Transverse colon (tissue), 4 donors: ENCODE measurements at regions of chr6 and their contacts with region 1.

Region 1: DNA sequence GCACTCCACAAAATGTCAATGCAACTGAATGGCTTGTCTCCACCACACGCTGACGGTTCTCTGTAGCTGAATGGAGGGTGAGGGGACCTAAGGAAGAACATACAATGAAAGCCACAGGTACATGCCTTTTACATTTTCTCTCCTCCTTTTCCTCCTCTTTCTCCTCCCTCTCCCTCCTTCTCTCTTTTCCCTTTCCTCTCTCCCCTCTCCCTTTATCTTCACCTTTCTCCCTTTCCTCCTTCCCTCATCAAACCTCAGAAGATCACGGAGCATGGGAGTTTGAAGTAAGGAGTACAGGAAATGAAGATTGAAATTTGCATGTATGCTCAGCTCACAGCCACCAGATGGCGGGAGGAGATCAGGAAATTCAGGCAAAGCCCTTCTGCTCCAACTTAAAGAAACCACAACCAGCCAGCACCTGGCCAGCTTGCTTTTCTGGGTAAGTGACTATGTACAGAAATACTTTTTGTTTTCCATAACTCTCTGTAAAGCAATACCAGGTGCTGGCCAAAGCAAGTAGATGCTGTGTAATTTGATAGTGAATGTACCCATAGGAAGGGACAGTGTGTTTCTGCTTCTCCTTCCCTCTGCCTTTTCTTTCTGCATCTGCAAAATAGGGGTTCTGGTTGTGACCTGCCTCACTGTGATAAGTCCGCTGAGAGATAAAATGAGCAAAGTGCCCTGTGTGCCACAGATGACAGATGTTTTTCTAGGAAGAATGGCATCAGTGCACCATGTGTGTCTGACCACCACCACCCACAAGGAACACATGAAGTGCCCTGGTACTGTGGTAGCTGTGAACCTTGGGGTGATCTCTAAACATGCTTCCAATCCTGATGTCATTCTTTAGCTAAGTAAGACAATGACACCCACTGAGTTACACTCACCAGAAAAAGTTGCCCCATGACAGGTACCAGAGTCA is 18.6 kb upstream of the FOXO3 start:
- DNase-seq: peak; percentile 83
- H3K4me3 ChIP-seq: no peak overlapping the region
- H3K27ac ChIP-seq: peak overlapping the region in 1 of 4 donors; percentile 41
- H3K4me1 ChIP-seq: peaks cover 0 to 8% (median 5%) of the 10 kb centered on the region in 4 donors
- H3K27me3 ChIP-seq: no peaks in the 10 kb centered on the region
- CTCF ChIP-seq: peak; percentile 79 to 95 (median 83)
- EP300 ChIP-seq: no peak
- POLR2A ChIP-seq: no peak

Region 2: GRCh38 chr6:108699290-108700041 is 157.4 kb after region 1 on chr6:
- in situ Hi-C with region 1: no loop called
- intact Hi-C with region 1: no loop called
- DNase-seq: no peak
- H3K4me3 ChIP-seq: no peak overlapping the region
- H3K27ac ChIP-seq: no peak overlapping the region
- H3K4me1 ChIP-seq: no peaks in the 10 kb centered on the region
- H3K27me3 ChIP-seq: no peaks in the 10 kb centered on the region
- CTCF ChIP-seq: no peak
- EP300 ChIP-seq: no peak
- POLR2A ChIP-seq: no peak

Region 3: GRCh38 chr6:108835218-108835850 is 293.2 kb after region 1 on chr6:
- in situ Hi-C with region 1: loop called in 3 of 4 experiments (anchors 10 to 25 kb)
- intact Hi-C with region 1: loop called (anchors 5 kb)
- DNase-seq: peak; percentile 92
- H3K4me3 ChIP-seq: no peak overlapping the region
- H3K27ac ChIP-seq: no peak overlapping the region
- H3K4me1 ChIP-seq: peaks cover 0 to 8% (median 0%) of the 10 kb centered on the region in 4 donors
- H3K27me3 ChIP-seq: no peaks in the 10 kb centered on the region
- CTCF ChIP-seq: peak; percentile 91 to 97 (median 96)
- EP300 ChIP-seq: no peak
- POLR2A ChIP-seq: no peak

Region 4: GRCh38 chr6:108896111-108896661 is 354.1 kb after region 1 on chr6:
- in situ Hi-C with region 1: loop called in 2 of 4 experiments (anchors 10 kb)
- intact Hi-C with region 1: loop called (anchors 5 kb)
- DNase-seq: no peak
- H3K4me3 ChIP-seq: no peak overlapping the region
- H3K27ac ChIP-seq: peak overlapping the region; percentile 9 to 61 (median 48)
- H3K4me1 ChIP-seq: peaks cover 3 to 13% (median 7%) of the 10 kb centered on the region in 4 donors
- H3K27me3 ChIP-seq: no peaks in the 10 kb centered on the region
- CTCF ChIP-seq: no peak
- EP300 ChIP-seq: no peak
- POLR2A ChIP-seq: no peak

Region 5: GRCh38 chr6:109073344-109074132 is 531.4 kb after region 1 on chr6:
- in situ Hi-C with region 1: loop called (anchors 5 to 10 kb)
- intact Hi-C with region 1: loop called (anchors 10 kb)
- DNase-seq: no peak
- H3K4me3 ChIP-seq: no peak overlapping the region
- H3K27ac ChIP-seq: no peak overlapping the region
- H3K4me1 ChIP-seq: peaks cover 9 to 51% (median 23%) of the 10 kb centered on the region in 4 donors
- H3K27me3 ChIP-seq: no peaks in the 10 kb centered on the region
- CTCF ChIP-seq: peak; percentile 60 to 75 (median 62)
- EP300 ChIP-seq: no peak
- POLR2A ChIP-seq: no peak

Region 6: DNA sequence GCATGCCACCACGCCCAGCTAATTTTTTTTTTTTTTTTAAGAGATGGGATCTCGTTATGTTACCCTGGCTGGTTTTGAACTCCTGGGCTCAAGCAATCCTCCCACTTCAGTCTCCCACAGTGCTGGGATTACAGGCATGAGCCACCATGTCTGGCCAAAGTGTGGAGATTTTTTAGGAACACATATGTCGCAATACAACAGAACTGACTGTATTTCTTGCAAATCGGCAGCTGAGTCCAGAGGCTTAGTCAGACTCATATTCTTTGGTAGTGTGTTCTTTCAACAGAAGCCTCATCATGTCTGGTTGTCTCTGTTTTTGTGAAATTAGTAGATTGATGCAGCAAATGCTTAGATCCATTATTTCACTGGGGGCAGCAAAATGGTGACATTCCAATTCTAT is 864.1 kb after region 1 on chr6:
- in situ Hi-C with region 1: loop called in 1 of 4 experiments (anchors 25 kb)
- intact Hi-C with region 1: no loop called
- DNase-seq: no peak
- H3K4me3 ChIP-seq: no peak overlapping the region
- H3K27ac ChIP-seq: no peak overlapping the region
- H3K4me1 ChIP-seq: no peaks in the 10 kb centered on the region
- H3K27me3 ChIP-seq: no peaks in the 10 kb centered on the region
- CTCF ChIP-seq: no peak
- EP300 ChIP-seq: no peak
- POLR2A ChIP-seq: no peak